CD8-positive, alpha-beta T cell (primary cell): ENCODE measurements at regions of chr2 and their contacts with region 1.

Region 1: GRCh38 chr2:236512902-236513435 is 56.7 kb upstream of the ACKR3 start:
- DNase-seq: peak; percentile 52 to 84 (median 72)
- ATAC-seq: peak; percentile 96
- H3K4me3 ChIP-seq: no peak overlapping the region
- H3K4me3 Mint-ChIP-seq: no peak overlapping the region
- H3K27ac ChIP-seq: no peak overlapping the region
- H3K27ac Mint-ChIP-seq: no peak overlapping the region
- H3K4me1 ChIP-seq: peaks cover 8% of the 10 kb centered on the region
- H3K4me1 Mint-ChIP-seq: no peaks in the 10 kb centered on the region
- H3K27me3 ChIP-seq: no peaks in the 10 kb centered on the region
- H3K27me3 Mint-ChIP-seq: no peaks in the 10 kb centered on the region
- CTCF ChIP-seq: peak; percentile 83

Region 2: GRCh38 chr2:236352761-236353593 is 160.0 kb before region 1 on chr2:
- CTCF ChIA-PET with region 1: interaction called, 12 read pairs
- POLR2A ChIA-PET with region 1: no interaction called
- intact Hi-C with region 1: loop called (anchors 1 to 5 kb)
- DNase-seq: peak in 6 of 9 experiments; percentile 17 to 64 (median 40)
- ATAC-seq: peak; percentile 62
- H3K4me3 ChIP-seq: no peak overlapping the region
- H3K4me3 Mint-ChIP-seq: no peak overlapping the region
- H3K27ac ChIP-seq: no peak overlapping the region
- H3K27ac Mint-ChIP-seq: no peak overlapping the region
- H3K4me1 ChIP-seq: no peaks in the 10 kb centered on the region
- H3K4me1 Mint-ChIP-seq: peaks cover 2% of the 10 kb centered on the region
- H3K27me3 ChIP-seq: no peaks in the 10 kb centered on the region
- H3K27me3 Mint-ChIP-seq: peaks cover 11% of the 10 kb centered on the region
- CTCF ChIP-seq: peak; percentile 96

Region 3: GRCh38 chr2:236440110-236440881 is 72.7 kb before region 1 on chr2:
- CTCF ChIA-PET with region 1: no interaction called
- POLR2A ChIA-PET with region 1: no interaction called
- intact Hi-C with region 1: no loop called
- DNase-seq: no peak
- ATAC-seq: no peak
- H3K4me3 ChIP-seq: no peak overlapping the region
- H3K4me3 Mint-ChIP-seq: no peak overlapping the region
- H3K27ac ChIP-seq: no peak overlapping the region
- H3K27ac Mint-ChIP-seq: no peak overlapping the region
- H3K4me1 ChIP-seq: no peaks in the 10 kb centered on the region
- H3K4me1 Mint-ChIP-seq: no peaks in the 10 kb centered on the region
- H3K27me3 ChIP-seq: no peaks in the 10 kb centered on the region
- H3K27me3 Mint-ChIP-seq: peaks cover 9% of the 10 kb centered on the region
- CTCF ChIP-seq: no peak

Region 4: DNA sequence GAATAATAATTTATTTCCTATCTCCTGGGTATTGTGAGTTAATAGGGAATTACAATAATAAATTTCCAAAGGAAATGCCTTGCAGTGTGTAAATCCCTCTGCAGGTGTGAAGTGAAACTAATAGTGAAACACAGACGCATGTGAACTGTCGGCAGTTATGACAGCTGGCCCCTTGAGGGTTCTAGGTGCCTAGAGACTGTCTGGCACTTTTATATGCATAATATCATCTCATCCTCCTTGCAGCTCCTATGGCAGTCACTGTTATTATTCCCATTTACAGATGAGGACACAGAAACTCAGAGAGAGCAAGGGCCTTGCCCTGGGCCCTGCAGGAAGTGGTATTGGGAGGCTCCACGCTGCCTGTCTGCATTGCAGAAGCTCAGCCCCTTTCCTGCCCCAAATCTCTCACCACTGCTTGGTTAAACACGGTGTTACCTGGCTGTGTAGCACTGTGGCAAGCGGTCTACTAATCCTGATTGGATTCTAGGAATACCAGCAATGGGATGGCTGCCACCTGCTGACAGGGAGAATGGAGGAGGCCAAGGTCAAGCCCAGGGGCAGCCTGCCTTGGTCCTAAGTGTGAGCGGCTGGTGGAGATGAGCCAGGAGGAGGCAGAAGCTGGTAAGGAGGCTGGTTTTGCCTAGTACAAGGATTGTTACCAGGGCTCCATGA is 23.9 kb after region 1 on chr2:
- CTCF ChIA-PET with region 1: interaction called, 45 read pairs
- POLR2A ChIA-PET with region 1: interaction called, 4 read pairs
- intact Hi-C with region 1: no loop called
- DNase-seq: peak; percentile 17 to 81 (median 66)
- ATAC-seq: peak; percentile 94
- H3K4me3 ChIP-seq: peak overlapping the region; percentile 60 to 77
- H3K4me3 Mint-ChIP-seq: peak overlapping the region; percentile 98
- H3K27ac ChIP-seq: peak overlapping the region; percentile 66
- H3K27ac Mint-ChIP-seq: peak overlapping the region; percentile 98
- H3K4me1 ChIP-seq: peaks cover 37% of the 10 kb centered on the region
- H3K4me1 Mint-ChIP-seq: peaks cover 53% of the 10 kb centered on the region
- H3K27me3 ChIP-seq: no peaks in the 10 kb centered on the region
- H3K27me3 Mint-ChIP-seq: no peaks in the 10 kb centered on the region
- CTCF ChIP-seq: no peak

Region 5: GRCh38 chr2:236552581-236553363 is 39.8 kb after region 1 on chr2:
- CTCF ChIA-PET with region 1: interaction called, 25 read pairs
- POLR2A ChIA-PET with region 1: interaction called, 3 read pairs
- intact Hi-C with region 1: loop called (anchors 2 to 5 kb)
- DNase-seq: no peak
- ATAC-seq: no peak
- H3K4me3 ChIP-seq: no peak overlapping the region
- H3K4me3 Mint-ChIP-seq: no peak overlapping the region
- H3K27ac ChIP-seq: no peak overlapping the region
- H3K27ac Mint-ChIP-seq: peak overlapping the region; percentile 82
- H3K4me1 ChIP-seq: peaks cover 62% of the 10 kb centered on the region
- H3K4me1 Mint-ChIP-seq: peaks cover 86% of the 10 kb centered on the region
- H3K27me3 ChIP-seq: no peaks in the 10 kb centered on the region
- H3K27me3 Mint-ChIP-seq: no peaks in the 10 kb centered on the region
- CTCF ChIP-seq: no peak

Region 6: GRCh38 chr2:236569573-236569973 is 56.6 kb after region 1 on chr2 and contains the start of gene ACKR3:
- CTCF ChIA-PET with region 1: interaction called, 323 read pairs
- POLR2A ChIA-PET with region 1: interaction called, 38 read pairs
- intact Hi-C with region 1: loop called (anchors 1 kb)
- DNase-seq: peak; percentile 46 to 96 (median 77)
- ATAC-seq: peak; percentile 98
- H3K4me3 ChIP-seq: peak within 1 kb of the TSS; percentile 44 to 54
- H3K4me3 Mint-ChIP-seq: peak within 1 kb of the TSS; percentile 84
- H3K27ac ChIP-seq: peak within 1 kb of the TSS in 1 of 2 experiments; percentile 4
- H3K27ac Mint-ChIP-seq: peak within 1 kb of the TSS; percentile 72
- H3K4me1 ChIP-seq: peaks cover 15% of the 10 kb centered on the region
- H3K4me1 Mint-ChIP-seq: peaks cover 33% of the 10 kb centered on the region
- H3K27me3 ChIP-seq: no peaks in the 10 kb centered on the region
- H3K27me3 Mint-ChIP-seq: no peaks in the 10 kb centered on the region
- CTCF ChIP-seq: peak; percentile 53
- total RNA-seq, gene ACKR3: 0.50 to 2.0 TPM

Region 7: GRCh38 chr2:236587861-236588815 is 75.2 kb after region 1 on chr2:
- CTCF ChIA-PET with region 1: interaction called, 11 read pairs
- POLR2A ChIA-PET with region 1: no interaction called
- intact Hi-C with region 1: no loop called
- DNase-seq: no peak
- ATAC-seq: no peak
- H3K4me3 ChIP-seq: no peak overlapping the region
- H3K4me3 Mint-ChIP-seq: no peak overlapping the region
- H3K27ac ChIP-seq: no peak overlapping the region
- H3K27ac Mint-ChIP-seq: no peak overlapping the region
- H3K4me1 ChIP-seq: no peaks in the 10 kb centered on the region
- H3K4me1 Mint-ChIP-seq: no peaks in the 10 kb centered on the region
- H3K27me3 ChIP-seq: no peaks in the 10 kb centered on the region
- H3K27me3 Mint-ChIP-seq: no peaks in the 10 kb centered on the region
- CTCF ChIP-seq: no peak

Region 8: DNA sequence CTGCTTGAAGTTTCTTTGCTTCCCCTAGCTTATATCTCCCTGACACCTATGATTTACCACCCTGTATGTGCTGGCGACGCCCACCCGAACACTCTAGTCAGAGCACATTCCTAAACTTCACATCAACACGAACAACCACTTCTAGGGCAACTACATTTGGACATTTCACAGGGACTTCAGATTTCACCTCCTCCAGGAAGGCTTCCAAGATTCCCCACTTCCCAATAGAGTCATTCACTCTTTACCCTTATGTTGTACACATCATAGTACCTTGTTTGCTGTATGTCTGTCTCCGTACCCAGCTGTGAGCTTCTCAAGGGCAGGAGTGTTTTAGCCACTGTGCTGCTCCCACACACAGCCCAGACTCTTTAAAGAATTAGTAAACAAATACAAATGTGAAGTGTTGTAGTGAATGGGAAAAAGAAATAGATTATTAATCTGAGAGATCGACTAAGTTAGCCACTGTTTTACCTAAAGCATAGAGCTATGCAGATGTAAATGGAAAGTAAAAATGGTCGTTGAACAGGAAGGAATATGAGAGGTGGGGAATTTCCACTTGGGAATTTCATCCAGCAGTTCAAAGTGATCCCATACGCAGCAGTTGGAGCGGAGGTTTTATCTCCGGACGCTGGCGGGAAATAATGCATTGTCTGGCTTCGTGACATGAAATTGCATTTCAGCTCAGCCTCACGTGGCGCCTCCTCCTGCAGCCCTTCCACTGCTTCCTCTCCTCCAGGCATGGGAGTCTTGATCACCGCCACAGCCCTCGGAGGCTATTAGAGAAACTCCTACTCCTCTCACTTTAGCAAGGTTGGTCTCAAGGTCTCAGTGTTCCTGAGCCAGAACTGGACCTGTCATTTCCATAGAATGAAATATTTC is 339.4 kb after region 1 on chr2:
- CTCF ChIA-PET with region 1: no interaction called
- POLR2A ChIA-PET with region 1: no interaction called
- intact Hi-C with region 1: no loop called
- DNase-seq: no peak
- ATAC-seq: no peak
- H3K4me3 ChIP-seq: no peak overlapping the region
- H3K4me3 Mint-ChIP-seq: no peak overlapping the region
- H3K27ac ChIP-seq: no peak overlapping the region
- H3K27ac Mint-ChIP-seq: no peak overlapping the region
- H3K4me1 ChIP-seq: no peaks in the 10 kb centered on the region
- H3K4me1 Mint-ChIP-seq: no peaks in the 10 kb centered on the region
- H3K27me3 ChIP-seq: no peaks in the 10 kb centered on the region
- H3K27me3 Mint-ChIP-seq: peaks cover 3% of the 10 kb centered on the region
- CTCF ChIP-seq: no peak

Region 9: GRCh38 chr2:237060534-237061312 is 547.8 kb after region 1 on chr2:
- CTCF ChIA-PET with region 1: no interaction called
- POLR2A ChIA-PET with region 1: no interaction called
- intact Hi-C with region 1: loop called (anchors 1 to 2 kb)
- DNase-seq: peak in 3 of 9 experiments; percentile 11 to 56 (median 39)
- ATAC-seq: no peak
- H3K4me3 ChIP-seq: no peak overlapping the region
- H3K4me3 Mint-ChIP-seq: no peak overlapping the region
- H3K27ac ChIP-seq: no peak overlapping the region
- H3K27ac Mint-ChIP-seq: no peak overlapping the region
- H3K4me1 ChIP-seq: no peaks in the 10 kb centered on the region
- H3K4me1 Mint-ChIP-seq: no peaks in the 10 kb centered on the region
- H3K27me3 ChIP-seq: no peaks in the 10 kb centered on the region
- H3K27me3 Mint-ChIP-seq: no peaks in the 10 kb centered on the region
- CTCF ChIP-seq: peak; percentile 52